Posterior vena cava (tissue), 2 donors: ENCODE measurements at regions of chrX and their contacts with region 1.

Region 1: DNA sequence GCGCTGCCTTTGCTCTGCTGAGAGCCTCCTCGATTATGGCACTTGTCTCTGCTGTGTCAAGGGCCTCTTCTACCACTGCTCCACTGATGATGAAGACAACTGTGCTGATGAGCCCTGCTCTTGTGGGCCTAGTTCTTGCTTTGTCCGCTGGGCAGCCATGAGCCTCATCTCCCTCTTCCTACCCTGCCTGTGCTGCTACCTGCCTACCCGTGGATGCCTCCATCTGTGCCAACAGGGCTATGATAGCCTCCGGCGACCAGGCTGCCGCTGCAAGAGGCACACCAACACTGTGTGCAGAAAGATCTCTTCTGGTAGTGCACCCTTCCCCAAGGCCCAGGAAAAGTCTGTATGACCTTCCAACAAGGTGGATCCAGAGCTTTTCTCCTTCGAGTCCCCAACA is 106.8 kb upstream of the VAMP7 start:
- DNase-seq: no peak

Region 2: GRCh38 chrX:155745792-155746191 is 28.6 kb before region 1 on chrX:
- intact Hi-C with region 1: loop called in 1 of 2 experiments (anchors 1 kb)
- DNase-seq: no peak